ENCODE measurements at regions of chr5 and their contacts with region 1.

Region 1: DNA sequence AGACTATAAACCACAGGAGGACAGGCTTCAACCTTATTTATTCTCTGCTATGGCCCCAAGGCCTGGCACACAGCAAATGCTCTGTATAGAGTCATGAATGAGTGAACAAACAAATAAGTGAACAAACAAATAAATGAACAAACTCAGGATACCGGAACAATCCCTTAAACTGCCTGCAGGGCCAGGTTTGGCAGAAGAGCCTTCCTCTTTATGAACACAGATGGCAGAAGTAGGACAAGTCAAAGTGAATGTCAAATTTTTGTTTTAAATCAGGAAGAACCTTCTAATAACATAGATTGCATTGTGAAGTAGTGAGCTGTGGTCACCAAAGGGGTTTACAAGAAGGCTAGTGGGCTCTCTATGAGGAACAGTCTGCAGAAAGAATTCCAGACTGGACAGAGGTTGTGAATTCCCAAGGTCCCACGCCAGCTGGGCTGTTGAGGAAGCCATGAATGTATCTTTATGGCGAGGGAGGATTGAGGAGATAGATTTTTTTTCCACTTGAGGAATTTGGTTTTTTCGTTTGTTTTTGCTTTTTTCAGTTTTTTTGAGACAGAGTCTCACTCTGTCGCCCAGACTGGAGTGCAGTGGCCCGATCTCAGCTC is 30.3 kb upstream of the STING1 start:
- DNase-seq: no peak
- ATAC-seq: peak; percentile 9
- H3K4me3 ChIP-seq: no peak overlapping the region
- H3K27ac ChIP-seq: no peak overlapping the region
- H3K4me1 ChIP-seq: peaks cover 11% of the 10 kb centered on the region
- H3K27me3 ChIP-seq: no peaks in the 10 kb centered on the region
- CTCF ChIP-seq: 0 out of 6 replicates have a peak, but pooled peaks of 1 of the 3 experiments have one; percentile 7
- EP300 ChIP-seq: no peak
- POLR2A ChIP-seq: no peak
- RAD21 ChIP-seq: no peak

Region 2: DNA sequence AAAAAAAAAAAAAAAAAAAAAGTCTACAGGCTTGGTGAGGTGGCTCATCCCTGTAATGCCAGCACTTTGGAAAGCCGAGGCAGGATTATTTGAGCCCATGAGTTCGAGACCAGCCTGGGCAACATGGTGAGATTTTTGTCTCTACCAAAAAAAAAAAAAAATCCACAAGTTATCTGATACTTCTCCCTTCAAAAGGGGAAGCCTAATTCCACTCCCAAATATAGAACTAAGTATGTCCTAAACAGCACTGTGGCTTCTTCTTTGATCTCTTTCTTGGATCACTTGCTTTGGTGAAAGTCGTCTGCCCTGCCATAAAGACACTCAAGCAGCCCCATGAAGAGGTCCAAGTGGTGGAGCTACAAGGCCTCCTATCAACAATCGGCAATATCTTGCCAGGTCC is 11.5 kb before region 1 on chr5:
- CTCF ChIA-PET with region 1: interaction called, 25 read pairs
- POLR2A ChIA-PET with region 1: interaction called, 5 read pairs
- RAD21 ChIA-PET with region 1: interaction called, 5 read pairs
- SMC1A ChIA-PET with region 1: interaction called, 12 read pairs
- in situ Hi-C with region 1: no loop called
- intact Hi-C with region 1: no loop called
- DNase-seq: no peak
- ATAC-seq: no peak
- H3K4me3 ChIP-seq: no peak overlapping the region
- H3K27ac ChIP-seq: no peak overlapping the region
- H3K4me1 ChIP-seq: no peaks in the 10 kb centered on the region
- H3K27me3 ChIP-seq: no peaks in the 10 kb centered on the region
- CTCF ChIP-seq: no peak
- EP300 ChIP-seq: no peak
- POLR2A ChIP-seq: no peak
- RAD21 ChIP-seq: no peak